Ascending aorta (tissue), 2 donors: ENCODE measurements at regions of chr9 and their contacts with region 1.

Region 1: DNA sequence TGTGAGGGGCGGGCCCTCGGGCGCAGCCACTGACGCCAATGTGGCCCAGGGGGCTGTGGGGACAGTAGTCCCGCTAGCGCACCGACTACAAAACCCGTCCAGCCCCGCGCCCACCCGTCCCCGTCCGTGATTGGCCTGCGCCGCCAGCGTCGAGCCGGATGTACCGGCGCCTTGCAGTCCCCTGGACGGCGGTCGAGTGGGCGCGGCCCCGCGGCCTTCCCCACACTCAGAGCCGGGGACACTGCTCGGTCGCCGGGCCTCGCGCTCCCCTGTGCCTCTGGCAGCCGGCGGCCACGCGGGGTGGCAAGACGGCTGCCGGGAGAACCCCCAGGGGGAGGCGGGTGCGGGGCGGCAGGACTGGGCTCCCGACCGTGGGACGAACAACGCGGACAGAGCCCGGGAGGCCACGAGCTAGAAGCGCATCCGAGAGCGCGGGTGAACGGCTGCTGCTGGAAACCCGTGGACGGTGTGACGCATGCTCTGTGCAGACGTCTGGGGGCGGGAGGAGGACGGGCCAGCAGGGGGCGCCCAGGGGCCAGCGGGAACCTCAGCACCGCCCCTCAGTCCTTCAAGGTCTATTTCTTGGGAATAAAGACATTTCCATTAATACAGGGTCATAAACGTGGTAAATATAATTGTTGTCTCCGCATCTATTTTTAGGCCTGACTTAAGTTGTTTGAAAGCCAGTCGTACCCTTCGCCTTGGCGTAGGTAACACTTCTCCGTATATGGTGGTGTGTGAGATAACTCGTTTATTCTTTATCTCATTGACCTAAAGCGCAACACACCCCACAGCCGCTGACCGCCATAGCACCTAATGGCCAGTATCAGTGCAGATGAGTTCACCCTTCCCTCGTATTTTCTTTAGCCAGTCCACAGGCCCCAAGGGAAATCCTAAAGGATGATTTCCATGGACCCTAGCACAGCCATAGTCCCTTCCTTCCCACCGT is 629 bp upstream of the BICD2 start:
- DNase-seq: peak; percentile 98 to 99
- H3K4me3 ChIP-seq: peak overlapping the region; percentile 93 to 99
- H3K27ac ChIP-seq: peak overlapping the region; percentile 100
- H3K4me1 ChIP-seq: peaks cover 10 to 33% of the 10 kb centered on the region in 2 donors
- H3K27me3 ChIP-seq: no peaks in the 10 kb centered on the region
- CTCF ChIP-seq: peak; percentile 90 to 93 (median 92)

Region 2: GRCh38 chr9:91945277-91946085 is 819.8 kb before region 1 on chr9:
- intact Hi-C with region 1: no loop called
- DNase-seq: no peak
- H3K4me3 ChIP-seq: no peak overlapping the region
- H3K27ac ChIP-seq: no peak overlapping the region
- H3K4me1 ChIP-seq: peaks cover 0 to 5% of the 10 kb centered on the region in 2 donors
- H3K27me3 ChIP-seq: peaks cover 15% of the 10 kb centered on the region
- CTCF ChIP-seq: no peak

Region 3: GRCh38 chr9:92293452-92294296 is 471.6 kb before region 1 on chr9 and contains the start of gene IARS1:
- intact Hi-C with region 1: loop called (anchors 5 kb)
- DNase-seq: peak; percentile 96 to 100
- H3K4me3 ChIP-seq: peak within 1 kb of the TSS; percentile 64 to 80
- H3K27ac ChIP-seq: peak within 1 kb of the TSS; percentile 54 to 67
- H3K4me1 ChIP-seq: peaks cover 8 to 12% of the 10 kb centered on the region in 2 donors
- H3K27me3 ChIP-seq: no peaks in the 10 kb centered on the region
- CTCF ChIP-seq: peak in 1 of 3 experiments; percentile 33
- total RNA-seq, gene IARS1: 44.4 TPM

Region 4: GRCh38 chr9:92438900-92439526 is 326.2 kb before region 1 on chr9:
- intact Hi-C with region 1: loop called (anchors 2 kb)
- DNase-seq: no peak
- H3K4me3 ChIP-seq: no peak overlapping the region
- H3K27ac ChIP-seq: no peak overlapping the region
- H3K4me1 ChIP-seq: peaks cover 0 to 14% of the 10 kb centered on the region in 2 donors
- H3K27me3 ChIP-seq: no peaks in the 10 kb centered on the region
- CTCF ChIP-seq: peak; percentile 18 to 55 (median 51)

Region 5: GRCh38 chr9:92463984-92464383 is 301.3 kb before region 1 on chr9:
- intact Hi-C with region 1: no loop called
- DNase-seq: peak in 1 of 2 donors; percentile 73
- H3K4me3 ChIP-seq: no peak overlapping the region
- H3K27ac ChIP-seq: peak overlapping the region; percentile 94 to 95
- H3K4me1 ChIP-seq: peaks cover 3 to 22% of the 10 kb centered on the region in 2 donors
- H3K27me3 ChIP-seq: no peaks in the 10 kb centered on the region
- CTCF ChIP-seq: no peak

Region 6: GRCh38 chr9:92716557-92716956 is 48.7 kb before region 1 on chr9:
- intact Hi-C with region 1: loop called (anchors 2 kb)
- DNase-seq: no peak
- H3K4me3 ChIP-seq: no peak overlapping the region
- H3K27ac ChIP-seq: no peak overlapping the region
- H3K4me1 ChIP-seq: no peaks in the 10 kb centered on the region
- H3K27me3 ChIP-seq: no peaks in the 10 kb centered on the region
- CTCF ChIP-seq: peak; percentile 81 to 91 (median 83)

Region 7: GRCh38 chr9:92808726-92809451 is 43.6 kb after region 1 on chr9:
- intact Hi-C with region 1: loop called (anchors 5 kb)
- DNase-seq: peak in 1 of 2 donors; percentile 79
- H3K4me3 ChIP-seq: peak overlapping the region; percentile 39 to 45
- H3K27ac ChIP-seq: no peak overlapping the region
- H3K4me1 ChIP-seq: peaks cover 6 to 26% of the 10 kb centered on the region in 2 donors
- H3K27me3 ChIP-seq: peaks cover 35% of the 10 kb centered on the region
- CTCF ChIP-seq: peak in 1 of 3 experiments; percentile 32

Region 8: GRCh38 chr9:93095205-93096130 is 330.2 kb after region 1 on chr9:
- intact Hi-C with region 1: loop called (anchors 2 kb)
- DNase-seq: peak; percentile 98 to 100
- H3K4me3 ChIP-seq: peak overlapping the region; percentile 56 to 81
- H3K27ac ChIP-seq: peak overlapping the region; percentile 88 to 97
- H3K4me1 ChIP-seq: peaks cover 22 to 37% of the 10 kb centered on the region in 2 donors
- H3K27me3 ChIP-seq: no peaks in the 10 kb centered on the region
- CTCF ChIP-seq: peak in 1 of 3 experiments; percentile 4

Region 9: DNA sequence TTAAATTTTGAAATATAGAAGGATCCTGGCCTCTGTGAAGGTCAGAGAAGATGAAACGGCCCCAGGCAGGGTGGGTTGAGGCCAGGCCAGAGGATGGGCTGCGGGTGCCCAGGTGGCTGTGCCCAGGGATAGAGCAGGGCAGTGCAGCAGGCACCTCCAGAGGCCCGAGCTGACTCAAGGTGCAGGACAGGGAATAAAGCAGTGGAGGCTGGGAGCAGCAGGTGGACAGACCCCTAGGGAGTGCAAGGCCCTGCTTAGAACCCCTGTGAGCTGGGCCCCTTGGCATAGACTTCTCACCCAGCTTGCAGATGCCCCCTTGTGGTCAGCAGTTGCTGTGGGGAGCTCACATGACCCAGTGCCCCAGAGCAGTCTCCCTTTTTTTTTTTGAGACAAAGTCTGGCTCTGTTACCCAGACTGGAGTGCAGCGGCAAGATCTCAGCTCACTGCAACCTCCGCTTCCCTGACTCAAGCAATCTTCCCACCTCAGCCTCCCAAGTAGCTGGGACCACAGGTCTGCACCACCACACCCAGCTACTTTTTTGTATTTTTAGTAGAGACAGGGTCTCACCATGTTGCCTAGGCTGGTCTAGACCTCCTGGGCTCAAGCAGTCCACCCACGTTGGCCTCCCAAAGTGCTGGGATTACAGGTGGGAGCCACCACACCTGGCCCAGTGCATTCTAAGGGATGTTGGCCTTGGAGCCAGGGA is 537.4 kb after region 1 on chr9:
- intact Hi-C with region 1: no loop called
- DNase-seq: peak in 1 of 2 donors; percentile 63
- H3K4me3 ChIP-seq: no peak overlapping the region
- H3K27ac ChIP-seq: no peak overlapping the region
- H3K4me1 ChIP-seq: peaks cover 0 to 3% of the 10 kb centered on the region in 2 donors
- H3K27me3 ChIP-seq: no peaks in the 10 kb centered on the region
- CTCF ChIP-seq: peak in 2 of 3 experiments; percentile 18 to 38

Region 10: GRCh38 chr9:93453047-93453914 is 688.0 kb after region 1 on chr9 and contains the start of gene FAM120AOS:
- intact Hi-C with region 1: loop called (anchors 2 kb)
- DNase-seq: peak; percentile 78 to 96
- H3K4me3 ChIP-seq: peak within 1 kb of the TSS; percentile 63 to 68
- H3K27ac ChIP-seq: peak within 1 kb of the TSS; percentile 89 to 94
- H3K4me1 ChIP-seq: peaks cover 8 to 25% of the 10 kb centered on the region in 2 donors
- H3K27me3 ChIP-seq: no peaks in the 10 kb centered on the region
- CTCF ChIP-seq: no peak
- total RNA-seq, gene FAM120AOS: 19.9 TPM